ENCODE measurements at regions of chr3 and their contacts with region 1.

Region 1: GRCh38 chr3:54120657-54121413 is 1.5 kb upstream of the CACNA2D3 start:
- DNase-seq: no peak
- H3K4me3 ChIP-seq: peak overlapping the region; percentile 77
- H3K27ac ChIP-seq: peak overlapping the region; percentile 91
- H3K4me1 ChIP-seq: peaks cover 40% of the 10 kb centered on the region
- H3K27me3 ChIP-seq: peaks cover 64% of the 10 kb centered on the region
- CTCF ChIP-seq: no peak

Region 2: DNA sequence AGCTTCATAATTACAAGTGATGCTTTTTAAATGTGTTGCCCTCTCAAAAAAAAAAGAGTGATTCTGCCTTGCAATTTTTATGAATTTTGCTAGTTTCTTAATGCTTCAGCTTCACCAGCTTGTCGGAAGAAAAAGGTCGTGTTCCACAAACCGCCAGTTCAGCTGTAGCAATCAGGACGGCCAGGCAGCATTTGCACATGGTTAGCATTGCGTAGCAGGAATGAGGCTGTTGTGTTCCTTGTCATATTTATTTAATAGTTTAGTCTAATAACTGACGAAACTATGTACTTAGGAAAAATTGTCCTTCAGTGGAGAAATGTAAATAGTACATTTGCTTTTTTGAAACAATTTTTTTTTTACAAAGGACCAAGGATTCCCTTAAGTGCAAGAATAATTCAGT is 164.2 kb before region 1 on chr3:
- intact Hi-C with region 1: loop called (anchors 10 kb)
- DNase-seq: no peak
- H3K4me3 ChIP-seq: no peak overlapping the region
- H3K27ac ChIP-seq: no peak overlapping the region
- H3K4me1 ChIP-seq: no peaks in the 10 kb centered on the region
- H3K27me3 ChIP-seq: no peaks in the 10 kb centered on the region
- CTCF ChIP-seq: no peak